ENCODE measurements at regions of chr6 and their contacts with region 1.

Region 1: GRCh38 chr6:39892490-39893129 is 41.7 kb downstream of the MOCS1 start:
- DNase-seq: peak; percentile 72 to 84 (median 78)
- ATAC-seq: peak; percentile 81
- H3K4me3 ChIP-seq: no peak overlapping the region
- H3K27ac ChIP-seq: no peak overlapping the region
- H3K4me1 ChIP-seq: peaks cover 8% of the 10 kb centered on the region
- H3K27me3 ChIP-seq: no peaks in the 10 kb centered on the region
- CTCF ChIP-seq: peak; percentile 49 to 87 (median 73)
- POLR2A ChIP-seq: no peak

Region 2: GRCh38 chr6:39369987-39370386 is 522.6 kb before region 1 on chr6:
- intact Hi-C with region 1: loop called (anchors 5 kb)
- DNase-seq: peak; percentile 32 to 56 (median 34)
- ATAC-seq: no peak
- H3K4me3 ChIP-seq: no peak overlapping the region
- H3K27ac ChIP-seq: no peak overlapping the region
- H3K4me1 ChIP-seq: peaks cover under 1% of the 10 kb centered on the region
- H3K27me3 ChIP-seq: no peaks in the 10 kb centered on the region
- CTCF ChIP-seq: peak in 6 of 7 experiments; percentile 12 to 39 (median 26)
- POLR2A ChIP-seq: no peak

Measured in body of pancreas (tissue), 4 donors.